Head of caudate nucleus (tissue), 42 donors: ENCODE measurements at regions of chr18 and their contacts with region 1.

Region 1: DNA sequence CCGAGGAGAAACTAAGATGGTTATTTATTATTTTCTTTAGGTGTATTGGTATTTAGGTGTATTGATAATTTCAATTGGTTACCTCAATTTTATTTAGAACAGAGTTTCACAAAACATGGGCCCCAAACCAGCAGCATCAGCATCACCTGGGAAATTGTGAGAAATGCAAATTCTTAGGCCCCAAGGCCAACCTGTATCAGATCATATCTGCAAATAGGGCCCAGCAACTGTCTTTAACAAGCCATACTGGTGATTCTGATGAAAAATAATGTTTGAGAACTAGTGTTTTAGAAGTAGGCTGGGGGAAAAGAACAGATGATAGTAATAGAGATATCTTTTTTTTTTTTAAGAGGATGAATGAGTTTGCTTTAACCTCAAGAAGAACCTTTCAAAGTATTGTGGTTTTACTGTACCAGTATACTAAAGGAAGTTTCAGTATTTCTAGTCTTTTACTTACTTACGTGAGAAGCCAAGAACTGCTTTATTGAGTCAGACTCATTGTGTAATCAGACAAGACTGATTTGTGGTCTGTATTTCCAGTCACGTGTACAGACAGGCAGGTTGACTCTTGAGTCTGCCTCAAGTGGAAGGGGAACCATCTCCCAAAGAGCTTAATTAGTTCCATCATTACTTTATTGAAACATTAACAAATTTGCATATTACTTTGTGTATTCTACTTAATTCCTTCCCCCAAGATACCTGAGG is 60.4 kb upstream of the GAREM1 start:
- DNase-seq: no peak

Region 2: GRCh38 chr18:32425466-32425865 is 105.6 kb before region 1 on chr18:
- intact Hi-C with region 1: no loop called
- DNase-seq: no peak

Region 3: GRCh38 chr18:32480581-32480980 is 50.5 kb before region 1 on chr18:
- intact Hi-C with region 1: loop called (anchors 10 kb)
- DNase-seq: no peak